Sigmoid colon (tissue), 7 donors: ENCODE measurements at regions of chr16 and their contacts with region 1.

Region 1: DNA sequence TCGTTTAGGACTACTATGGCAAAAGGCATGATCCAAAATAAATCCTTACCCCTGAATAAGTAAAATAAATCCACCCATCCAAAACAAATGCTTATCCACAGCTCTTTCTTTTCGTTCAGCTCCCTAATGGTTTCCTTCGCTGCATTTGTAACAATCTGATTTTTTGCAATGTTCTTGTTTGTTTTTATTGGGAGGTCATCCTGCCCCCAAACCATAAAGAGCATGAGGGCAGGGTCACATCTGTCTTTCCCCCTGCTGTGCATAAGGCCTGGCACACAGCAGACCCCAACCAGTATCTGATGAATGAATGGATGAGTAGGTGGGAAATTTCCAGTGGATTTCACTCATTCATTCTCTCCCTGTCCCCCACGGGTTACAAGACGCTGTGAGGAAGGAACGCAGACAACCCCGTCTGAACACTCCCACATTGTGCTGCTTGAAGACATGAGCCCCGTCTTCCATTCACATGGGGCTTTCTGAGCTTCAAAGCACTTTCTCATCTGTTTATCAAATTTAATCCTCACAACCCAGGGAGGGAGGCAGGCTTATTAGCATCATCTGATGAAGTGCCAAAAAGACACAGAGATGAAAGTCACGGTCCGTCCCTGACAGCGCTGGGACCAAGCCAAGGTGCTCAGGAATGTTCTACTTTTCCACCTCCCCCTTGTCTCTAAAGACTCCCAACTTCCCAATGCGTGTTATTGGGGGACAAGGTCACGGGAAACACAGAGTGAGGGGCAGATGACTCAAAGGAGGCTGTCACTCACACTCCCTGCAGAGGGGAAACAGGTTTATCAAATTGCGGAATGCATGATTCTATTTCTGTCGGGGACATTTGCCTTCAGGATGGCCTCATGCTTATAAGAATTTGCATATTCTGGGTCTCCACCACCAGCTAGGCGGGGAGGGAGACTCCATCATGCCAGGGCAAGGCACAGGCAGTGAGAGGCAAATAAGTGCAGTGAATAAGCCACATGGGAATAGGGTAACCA is 10.9 kb downstream of the XYLT1 start:
- DNase-seq: no peak
- H3K4me3 ChIP-seq: no peak overlapping the region
- H3K27ac ChIP-seq: peak overlapping the region in 1 of 4 donors; percentile 33
- H3K4me1 ChIP-seq: peaks cover 0 to 32% (median 26%) of the 10 kb centered on the region in 4 donors
- H3K27me3 ChIP-seq: no peaks in the 10 kb centered on the region
- CTCF ChIP-seq: no peak
- EP300 ChIP-seq: no peak
- POLR2A ChIP-seq: no peak

Region 2: DNA sequence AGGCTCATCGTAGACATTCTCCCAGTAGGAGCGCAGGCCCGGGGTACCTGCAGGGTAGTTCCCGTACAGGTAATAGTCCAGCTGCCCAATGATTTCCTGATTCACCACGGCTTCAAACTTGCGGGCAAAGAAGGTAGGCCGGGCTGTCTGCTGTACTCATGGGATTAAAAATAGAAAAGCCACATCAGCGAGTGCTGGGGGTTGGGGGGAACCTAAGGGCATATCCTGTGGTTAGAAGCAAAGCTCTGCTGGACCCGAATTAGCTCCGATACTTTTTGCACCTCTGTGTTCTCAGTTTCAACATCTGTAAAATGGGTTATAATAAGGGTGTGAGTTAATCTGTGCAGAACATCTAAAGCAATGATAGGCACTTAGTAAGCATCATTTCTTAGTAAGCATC is 325.2 kb before region 1 on chr16:
- intact Hi-C with region 1: no loop called
- DNase-seq: no peak
- H3K4me3 ChIP-seq: no peak overlapping the region
- H3K27ac ChIP-seq: no peak overlapping the region
- H3K4me1 ChIP-seq: no peaks in the 10 kb centered on the region
- H3K27me3 ChIP-seq: no peaks in the 10 kb centered on the region
- CTCF ChIP-seq: no peak
- EP300 ChIP-seq: no peak
- POLR2A ChIP-seq: no peak

Region 3: DNA sequence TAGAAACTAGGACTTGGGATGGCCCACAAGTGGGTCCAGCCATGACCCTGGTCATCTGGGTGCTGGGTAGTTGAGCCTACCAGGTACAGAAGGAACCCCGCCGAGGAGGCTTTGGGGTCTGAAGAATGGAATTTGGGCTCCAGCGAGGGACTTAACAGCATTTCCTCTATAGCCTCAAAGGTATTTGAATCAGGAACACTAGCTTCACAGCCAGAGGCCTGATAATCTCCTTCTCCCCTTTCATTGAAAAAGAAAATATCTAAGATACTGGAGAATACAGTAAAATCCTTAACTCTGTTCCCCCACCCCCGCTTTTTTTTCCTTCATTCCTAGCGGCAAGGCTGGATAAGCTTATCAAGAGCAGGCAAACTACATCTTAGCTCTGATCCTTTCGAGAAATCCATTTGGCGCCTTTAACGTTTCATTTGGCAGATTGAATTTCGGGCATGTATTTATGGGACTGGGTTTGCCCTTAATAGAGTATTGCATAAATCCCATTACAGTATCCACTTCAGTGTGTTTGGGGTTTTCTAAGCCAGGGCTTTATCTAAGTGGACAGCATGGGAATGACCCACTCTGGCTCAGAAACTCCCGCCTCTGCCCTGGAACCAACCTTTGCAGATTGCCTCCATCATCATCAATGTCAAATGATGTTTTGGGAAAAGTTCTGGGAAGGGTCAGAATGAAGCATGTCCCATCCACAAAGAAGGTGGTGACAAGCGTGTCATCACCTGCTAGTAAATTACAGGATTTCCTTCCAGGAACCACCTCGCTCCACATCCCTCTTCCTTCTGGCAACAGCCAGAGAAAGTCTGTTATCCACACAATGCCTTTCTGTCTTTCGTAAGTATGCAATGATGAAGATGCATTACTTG is 26.0 kb before region 1 on chr16:
- intact Hi-C with region 1: loop called (anchors 1 kb)
- DNase-seq: no peak
- H3K4me3 ChIP-seq: no peak overlapping the region
- H3K27ac ChIP-seq: peak overlapping the region in 3 of 4 donors; percentile 39 to 61 (median 40)
- H3K4me1 ChIP-seq: peaks cover 0 to 37% (median 35%) of the 10 kb centered on the region in 4 donors
- H3K27me3 ChIP-seq: no peaks in the 10 kb centered on the region
- CTCF ChIP-seq: no peak
- EP300 ChIP-seq: no peak
- POLR2A ChIP-seq: no peak

Region 4: DNA sequence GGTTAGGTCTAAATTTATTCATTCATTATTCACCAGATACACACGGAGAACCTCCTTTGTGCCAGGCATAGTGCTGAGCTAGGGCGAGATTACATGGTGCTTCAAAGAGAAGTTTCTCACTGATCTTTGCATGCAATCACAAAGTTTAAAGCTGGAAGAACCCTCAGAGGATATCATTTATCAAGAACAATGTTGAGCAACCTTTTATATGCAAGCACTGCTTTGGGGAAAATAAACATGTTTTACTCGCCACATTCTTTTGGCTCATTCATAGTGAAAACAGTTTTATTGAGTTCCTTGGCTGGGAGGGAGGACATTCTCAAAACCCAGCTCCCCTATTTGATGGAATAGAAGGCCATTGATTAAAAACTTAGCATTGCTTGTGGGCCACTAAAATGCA is 60.7 kb after region 1 on chr16:
- intact Hi-C with region 1: no loop called
- DNase-seq: no peak
- H3K4me3 ChIP-seq: no peak overlapping the region
- H3K27ac ChIP-seq: no peak overlapping the region
- H3K4me1 ChIP-seq: no peaks in the 10 kb centered on the region
- H3K27me3 ChIP-seq: peaks cover 0 to 5% (median 0%) of the 10 kb centered on the region in 3 donors
- CTCF ChIP-seq: no peak
- EP300 ChIP-seq: no peak
- POLR2A ChIP-seq: no peak